Naive thymus-derived CD4-positive, alpha-beta T cell (primary cell): ENCODE measurements at regions of chr12 and their contacts with region 1.

Region 1: GRCh38 chr12:89461649-89462612 is 62.7 kb downstream of the GALNT4 start:
- DNase-seq: peak in 6 of 9 donors; percentile 26 to 68 (median 54)
- ATAC-seq: peak; percentile 95
- H3K4me3 ChIP-seq: no peak overlapping the region
- H3K4me3 Mint-ChIP-seq: peak overlapping the region in 7 of 10 donors; percentile 10 to 81 (median 53)
- H3K27ac ChIP-seq: no peak overlapping the region
- H3K27ac Mint-ChIP-seq: peak overlapping the region in 6 of 9 donors; percentile 5 to 71 (median 41)
- H3K4me1 ChIP-seq: peaks cover 0 to 3% of the 10 kb centered on the region in 2 donors
- H3K4me1 Mint-ChIP-seq: peaks cover 7 to 52% (median 18%) of the 10 kb centered on the region in 7 donors
- H3K27me3 ChIP-seq: no peaks in the 10 kb centered on the region
- H3K27me3 Mint-ChIP-seq: no peaks in the 10 kb centered on the region

Region 2: DNA sequence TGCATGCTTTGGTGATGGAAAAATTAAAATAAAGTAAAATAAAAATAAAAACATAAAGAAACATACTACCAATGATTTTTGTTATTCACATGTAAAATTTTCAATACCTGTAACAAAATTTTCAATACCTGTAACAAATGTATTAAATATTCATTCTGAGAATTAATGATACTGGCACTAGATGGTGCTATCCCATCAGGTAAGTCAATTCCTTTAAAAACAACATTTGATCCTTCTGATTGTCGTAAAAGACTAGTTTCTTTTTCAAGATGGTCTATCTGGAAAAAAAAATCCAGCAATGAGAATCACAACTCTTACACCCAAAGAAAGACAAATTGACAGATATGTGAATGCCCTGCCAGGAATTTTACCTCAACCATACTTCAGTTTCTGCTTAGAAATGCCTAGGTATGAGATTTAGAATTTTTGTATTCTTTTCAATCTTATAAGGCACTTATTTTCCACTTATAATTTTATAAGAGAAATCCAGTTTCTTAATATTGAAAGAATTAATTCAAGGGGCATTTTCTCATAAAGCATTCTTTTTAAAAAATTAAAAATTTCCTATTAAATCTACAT is 1350.8 kb before region 1 on chr12:
- CTCF ChIA-PET with region 1: no interaction called
- POLR2A ChIA-PET with region 1: no interaction called
- intact Hi-C with region 1: loop called in 1 of 2 experiments (anchors 5 kb)
- DNase-seq: peak in 4 of 9 donors; percentile 6 to 22 (median 17)
- ATAC-seq: no peak
- H3K4me3 ChIP-seq: no peak overlapping the region
- H3K4me3 Mint-ChIP-seq: peak overlapping the region in 3 of 10 donors; percentile 30 to 46 (median 45)
- H3K27ac ChIP-seq: no peak overlapping the region
- H3K27ac Mint-ChIP-seq: peak overlapping the region in 1 of 9 donors; percentile 52
- H3K4me1 ChIP-seq: no peaks in the 10 kb centered on the region
- H3K4me1 Mint-ChIP-seq: peaks cover 0 to 4% (median 0%) of the 10 kb centered on the region in 7 donors
- H3K27me3 ChIP-seq: no peaks in the 10 kb centered on the region
- H3K27me3 Mint-ChIP-seq: no peaks in the 10 kb centered on the region

Region 3: DNA sequence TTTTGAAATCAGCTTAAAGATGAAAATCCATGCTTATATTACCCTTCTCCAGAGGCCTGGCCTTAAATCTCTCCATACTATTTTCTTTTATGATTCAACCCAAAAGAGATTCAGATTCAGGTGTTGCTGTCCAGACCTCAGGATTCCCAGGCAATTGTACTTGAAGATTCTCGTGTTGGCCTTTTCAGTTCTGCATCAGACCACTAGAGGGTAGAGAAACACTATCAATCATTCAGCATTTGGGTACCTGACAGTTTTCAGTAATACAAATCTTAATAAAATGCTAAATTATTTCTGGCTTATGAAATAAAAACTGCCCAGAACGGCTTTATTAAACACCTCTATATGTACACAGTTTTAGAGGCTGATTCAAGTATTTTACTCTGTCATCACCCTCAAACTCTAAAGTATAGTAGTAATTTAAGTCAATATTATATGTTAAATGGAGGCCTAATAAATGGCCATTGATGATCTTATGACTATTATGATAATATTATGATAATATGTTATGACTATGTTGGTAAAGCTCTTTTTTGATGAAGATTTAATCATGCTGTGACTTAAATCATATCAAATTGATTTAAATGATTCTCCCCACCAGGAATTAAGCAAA is 410.8 kb before region 1 on chr12:
- CTCF ChIA-PET with region 1: interaction called, 12 read pairs
- POLR2A ChIA-PET with region 1: no interaction called
- intact Hi-C with region 1: loop called (anchors 1 kb)
- DNase-seq: peak in 7 of 9 donors; percentile 28 to 63 (median 51)
- ATAC-seq: peak; percentile 70
- H3K4me3 ChIP-seq: no peak overlapping the region
- H3K4me3 Mint-ChIP-seq: no peak overlapping the region
- H3K27ac ChIP-seq: no peak overlapping the region
- H3K27ac Mint-ChIP-seq: peak overlapping the region in 1 of 9 donors; percentile 34
- H3K4me1 ChIP-seq: no peaks in the 10 kb centered on the region
- H3K4me1 Mint-ChIP-seq: peaks cover 0 to 30% (median 0%) of the 10 kb centered on the region in 7 donors
- H3K27me3 ChIP-seq: no peaks in the 10 kb centered on the region
- H3K27me3 Mint-ChIP-seq: no peaks in the 10 kb centered on the region

Region 4: GRCh38 chr12:89126712-89127111 is 335.2 kb before region 1 on chr12:
- CTCF ChIA-PET with region 1: no interaction called
- POLR2A ChIA-PET with region 1: no interaction called
- intact Hi-C with region 1: loop called in 1 of 2 experiments (anchors 5 kb)
- DNase-seq: no peak
- ATAC-seq: no peak
- H3K4me3 ChIP-seq: no peak overlapping the region
- H3K4me3 Mint-ChIP-seq: no peak overlapping the region
- H3K27ac ChIP-seq: no peak overlapping the region
- H3K27ac Mint-ChIP-seq: no peak overlapping the region
- H3K4me1 ChIP-seq: no peaks in the 10 kb centered on the region
- H3K4me1 Mint-ChIP-seq: peaks cover 0 to 4% (median 0%) of the 10 kb centered on the region in 7 donors
- H3K27me3 ChIP-seq: no peaks in the 10 kb centered on the region
- H3K27me3 Mint-ChIP-seq: peaks cover 0 to 2% (median 0%) of the 10 kb centered on the region in 5 donors

Region 5: GRCh38 chr12:89162704-89163261 is 299.1 kb before region 1 on chr12:
- CTCF ChIA-PET with region 1: no interaction called
- POLR2A ChIA-PET with region 1: no interaction called
- intact Hi-C with region 1: loop called in 1 of 2 experiments (anchors 5 kb)
- DNase-seq: peak in 1 of 9 donors; percentile 54
- ATAC-seq: peak; percentile 77
- H3K4me3 ChIP-seq: no peak overlapping the region
- H3K4me3 Mint-ChIP-seq: no peak overlapping the region
- H3K27ac ChIP-seq: no peak overlapping the region
- H3K27ac Mint-ChIP-seq: no peak overlapping the region
- H3K4me1 ChIP-seq: peaks cover 0 to 9% of the 10 kb centered on the region in 2 donors
- H3K4me1 Mint-ChIP-seq: peaks cover 10 to 31% (median 20%) of the 10 kb centered on the region in 7 donors
- H3K27me3 ChIP-seq: no peaks in the 10 kb centered on the region
- H3K27me3 Mint-ChIP-seq: no peaks in the 10 kb centered on the region

Region 6: DNA sequence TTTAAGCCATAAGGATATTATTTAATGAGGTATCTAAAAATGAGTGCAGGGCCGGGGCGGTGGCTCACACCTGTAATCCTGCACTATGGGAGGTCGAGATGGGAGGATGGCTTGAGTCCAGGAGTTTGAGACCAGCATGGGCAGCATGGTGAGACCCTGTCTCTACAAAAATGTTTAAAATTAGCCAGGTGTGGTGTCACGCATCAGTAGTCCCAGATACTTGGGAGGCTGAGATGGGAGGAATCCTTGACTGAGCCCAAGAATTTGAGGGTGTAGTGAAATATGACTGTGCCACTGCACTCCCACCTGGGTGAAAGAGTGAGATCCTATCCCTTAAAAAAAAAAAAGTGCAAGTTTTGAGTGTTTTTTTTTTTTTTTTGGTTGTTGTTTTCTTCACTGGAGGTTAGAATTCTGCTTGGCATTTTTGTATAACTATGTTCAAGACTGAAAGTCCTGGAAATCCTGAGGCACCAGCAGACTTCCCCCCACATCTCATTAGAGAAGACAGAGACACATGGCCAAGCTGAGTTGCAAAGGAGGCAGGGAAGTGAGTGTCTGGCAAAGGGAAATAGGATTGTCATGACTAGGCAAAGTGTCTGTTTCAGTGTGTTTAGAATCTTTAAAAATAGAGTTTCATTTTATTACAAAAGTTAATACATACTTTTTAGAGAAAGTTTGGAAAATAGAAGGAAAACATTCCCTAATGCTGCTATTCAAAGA is 56.1 kb before region 1 on chr12:
- CTCF ChIA-PET with region 1: no interaction called
- POLR2A ChIA-PET with region 1: no interaction called
- intact Hi-C with region 1: no loop called
- DNase-seq: no peak
- ATAC-seq: no peak
- H3K4me3 ChIP-seq: no peak overlapping the region
- H3K4me3 Mint-ChIP-seq: no peak overlapping the region
- H3K27ac ChIP-seq: no peak overlapping the region
- H3K27ac Mint-ChIP-seq: no peak overlapping the region
- H3K4me1 ChIP-seq: no peaks in the 10 kb centered on the region
- H3K4me1 Mint-ChIP-seq: no peaks in the 10 kb centered on the region
- H3K27me3 ChIP-seq: no peaks in the 10 kb centered on the region
- H3K27me3 Mint-ChIP-seq: no peaks in the 10 kb centered on the region

Region 7: GRCh38 chr12:89451841-89452251 is 10.1 kb before region 1 on chr12:
- CTCF ChIA-PET with region 1: interaction called, 10 read pairs
- POLR2A ChIA-PET with region 1: no interaction called
- intact Hi-C with region 1: no loop called
- DNase-seq: no peak
- ATAC-seq: no peak
- H3K4me3 ChIP-seq: no peak overlapping the region
- H3K4me3 Mint-ChIP-seq: no peak overlapping the region
- H3K27ac ChIP-seq: no peak overlapping the region
- H3K27ac Mint-ChIP-seq: no peak overlapping the region
- H3K4me1 ChIP-seq: peaks cover 0 to 5% of the 10 kb centered on the region in 2 donors
- H3K4me1 Mint-ChIP-seq: peaks cover 4 to 30% (median 7%) of the 10 kb centered on the region in 7 donors
- H3K27me3 ChIP-seq: no peaks in the 10 kb centered on the region
- H3K27me3 Mint-ChIP-seq: no peaks in the 10 kb centered on the region

Region 8: GRCh38 chr12:89529738-89530137 is 67.8 kb after region 1 on chr12:
- CTCF ChIA-PET with region 1: interaction called, 10 read pairs
- POLR2A ChIA-PET with region 1: no interaction called
- intact Hi-C with region 1: loop called in 1 of 2 experiments (anchors 1 kb)
- DNase-seq: peak in 7 of 9 donors; percentile 30 to 62 (median 52)
- ATAC-seq: peak; percentile 58
- H3K4me3 ChIP-seq: no peak overlapping the region
- H3K4me3 Mint-ChIP-seq: no peak overlapping the region
- H3K27ac ChIP-seq: no peak overlapping the region
- H3K27ac Mint-ChIP-seq: peak overlapping the region in 4 of 9 donors; percentile 7 to 71 (median 47)
- H3K4me1 ChIP-seq: peaks cover 5 to 6% of the 10 kb centered on the region in 2 donors
- H3K4me1 Mint-ChIP-seq: peaks cover 4 to 28% (median 16%) of the 10 kb centered on the region in 7 donors
- H3K27me3 ChIP-seq: no peaks in the 10 kb centered on the region
- H3K27me3 Mint-ChIP-seq: no peaks in the 10 kb centered on the region